ENCODE measurements at regions of chr5 and their contacts with region 1.

Region 1: GRCh38 chr5:131263648-131264450 is at the start of gene CDC42SE2:
- DNase-seq: peak; percentile 90 to 95
- ATAC-seq: peak; percentile 84 to 97 (median 90)
- H3K4me3 ChIP-seq: peak within 1 kb of the TSS; percentile 95
- H3K4me3 Mint-ChIP-seq: peak within 1 kb of the TSS; percentile 95
- H3K27ac ChIP-seq: peak within 1 kb of the TSS; percentile 97
- H3K27ac Mint-ChIP-seq: peak within 1 kb of the TSS; percentile 76 to 95
- H3K4me1 ChIP-seq: peaks cover 33% of the 10 kb centered on the region
- H3K4me1 Mint-ChIP-seq: peaks cover 33 to 41% of the 10 kb centered on the region in 2 donors
- H3K27me3 ChIP-seq: no peaks in the 10 kb centered on the region
- H3K27me3 Mint-ChIP-seq: no peaks in the 10 kb centered on the region
- CTCF ChIP-seq: no peak
- total RNA-seq, gene CDC42SE2: 140 to 183 (median 166) TPM

Region 2: GRCh38 chr5:131170540-131171275 is 93.1 kb before region 1 on chr5 and contains the start of gene LYRM7:
- intact Hi-C with region 1: loop called (anchors 2 kb)
- DNase-seq: peak; percentile 87 to 99
- ATAC-seq: peak; percentile 95 to 99 (median 95)
- H3K4me3 ChIP-seq: peak within 1 kb of the TSS; percentile 84
- H3K4me3 Mint-ChIP-seq: peak within 1 kb of the TSS; percentile 98
- H3K27ac ChIP-seq: peak within 1 kb of the TSS; percentile 87
- H3K27ac Mint-ChIP-seq: peak within 1 kb of the TSS; percentile 91 to 98
- H3K4me1 ChIP-seq: peaks cover 11% of the 10 kb centered on the region
- H3K4me1 Mint-ChIP-seq: peaks cover 29 to 32% of the 10 kb centered on the region in 2 donors
- H3K27me3 ChIP-seq: no peaks in the 10 kb centered on the region
- H3K27me3 Mint-ChIP-seq: no peaks in the 10 kb centered on the region
- CTCF ChIP-seq: no peak
- total RNA-seq, gene LYRM7: 7.4 to 9.7 (median 7.6) TPM

Region 3: GRCh38 chr5:131252824-131253171 is 11.1 kb before region 1 on chr5:
- intact Hi-C with region 1: loop called (anchors 1 kb)
- DNase-seq: peak; percentile 69 to 94
- ATAC-seq: peak; percentile 72 to 89 (median 88)
- H3K4me3 ChIP-seq: peak overlapping the region; percentile 47
- H3K4me3 Mint-ChIP-seq: peak overlapping the region; percentile 91
- H3K27ac ChIP-seq: peak overlapping the region; percentile 99
- H3K27ac Mint-ChIP-seq: peak overlapping the region; percentile 91 to 93
- H3K4me1 ChIP-seq: peaks cover 55% of the 10 kb centered on the region
- H3K4me1 Mint-ChIP-seq: peaks cover 54 to 58% of the 10 kb centered on the region in 2 donors
- H3K27me3 ChIP-seq: no peaks in the 10 kb centered on the region
- H3K27me3 Mint-ChIP-seq: no peaks in the 10 kb centered on the region
- CTCF ChIP-seq: no peak

Measured in natural killer cell (primary cell).